PC-9 (cell line): ENCODE measurements at regions of chr9 and their contacts with region 1.

Region 1: DNA sequence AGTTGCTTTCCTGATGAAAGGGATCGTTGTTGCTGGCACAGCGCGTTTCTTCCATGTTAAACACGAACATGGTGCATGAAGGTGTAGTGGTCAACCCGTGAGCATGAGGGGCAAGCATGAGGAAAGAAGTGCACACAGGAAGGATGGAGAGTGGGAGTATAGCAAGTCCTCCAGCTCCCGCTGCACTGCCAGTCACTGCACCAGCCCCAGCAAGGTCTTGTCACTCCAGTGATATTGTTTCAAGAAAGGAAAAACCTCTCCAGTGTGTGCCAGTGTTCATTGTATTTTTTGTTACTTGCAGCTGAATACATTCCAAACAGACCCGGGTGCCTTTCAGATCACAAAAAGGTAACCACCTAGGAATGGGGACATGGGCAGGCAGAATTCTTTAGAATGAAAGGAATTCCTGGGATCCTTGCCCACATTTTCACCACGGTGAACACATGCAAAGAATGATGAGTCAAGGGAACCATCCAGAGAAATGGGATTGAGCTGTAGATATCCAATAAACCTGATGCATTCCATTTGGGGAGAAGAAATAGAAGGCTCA is 186.3 kb downstream of the AOPEP start:
- DNase-seq: peak; percentile 79 to 94
- H3K4me3 ChIP-seq: no peak overlapping the region
- H3K27ac ChIP-seq: peak overlapping the region; percentile 97
- H3K4me1 ChIP-seq: peaks cover 68% of the 10 kb centered on the region
- H3K27me3 ChIP-seq: no peaks in the 10 kb centered on the region
- CTCF ChIP-seq: no peak

Region 2: DNA sequence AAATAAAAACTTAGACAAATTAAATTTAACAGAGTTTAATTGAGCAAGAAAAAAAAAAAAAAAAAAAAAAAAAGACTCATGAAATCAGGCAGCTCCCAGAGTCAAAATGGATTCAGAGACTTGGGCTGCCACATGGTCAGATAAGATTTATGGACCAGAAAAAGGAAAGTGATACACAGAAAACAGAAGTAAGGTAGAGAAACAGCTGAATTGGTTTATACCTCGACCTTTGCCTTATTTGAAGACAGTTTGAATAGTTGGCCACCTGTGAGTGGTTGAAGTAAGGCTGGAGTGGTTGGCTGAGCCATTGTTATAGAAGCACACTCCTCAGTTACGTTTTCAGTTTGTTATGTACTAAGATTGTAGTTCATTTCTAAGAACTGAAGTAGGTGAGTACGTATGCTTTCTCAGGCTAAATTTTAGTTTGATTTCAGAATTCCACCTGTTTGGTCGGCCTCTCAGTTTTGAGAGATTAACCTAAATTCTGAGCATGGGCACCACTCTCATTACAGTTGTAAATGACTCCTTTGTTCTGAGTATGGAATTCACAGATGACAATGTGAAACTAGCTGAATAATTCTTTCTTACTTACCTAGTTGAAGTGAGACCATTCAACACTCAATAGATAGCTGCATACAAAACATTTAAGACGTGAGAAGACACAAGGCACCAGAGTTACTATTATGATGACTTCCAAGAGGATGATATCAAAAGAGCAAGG is 37.3 kb before region 1 on chr9:
- CTCF ChIA-PET with region 1: interaction called, 11 read pairs
- POLR2A ChIA-PET with region 1: interaction called, 23 read pairs
- intact Hi-C with region 1: loop called (anchors 1 kb)
- DNase-seq: no peak
- H3K4me3 ChIP-seq: no peak overlapping the region
- H3K27ac ChIP-seq: no peak overlapping the region
- H3K4me1 ChIP-seq: peaks cover 52% of the 10 kb centered on the region
- H3K27me3 ChIP-seq: no peaks in the 10 kb centered on the region
- CTCF ChIP-seq: no peak